Brain microvascular endothelial cell (primary cell): ENCODE measurements at regions of chr4 and their contacts with region 1.

Region 1: DNA sequence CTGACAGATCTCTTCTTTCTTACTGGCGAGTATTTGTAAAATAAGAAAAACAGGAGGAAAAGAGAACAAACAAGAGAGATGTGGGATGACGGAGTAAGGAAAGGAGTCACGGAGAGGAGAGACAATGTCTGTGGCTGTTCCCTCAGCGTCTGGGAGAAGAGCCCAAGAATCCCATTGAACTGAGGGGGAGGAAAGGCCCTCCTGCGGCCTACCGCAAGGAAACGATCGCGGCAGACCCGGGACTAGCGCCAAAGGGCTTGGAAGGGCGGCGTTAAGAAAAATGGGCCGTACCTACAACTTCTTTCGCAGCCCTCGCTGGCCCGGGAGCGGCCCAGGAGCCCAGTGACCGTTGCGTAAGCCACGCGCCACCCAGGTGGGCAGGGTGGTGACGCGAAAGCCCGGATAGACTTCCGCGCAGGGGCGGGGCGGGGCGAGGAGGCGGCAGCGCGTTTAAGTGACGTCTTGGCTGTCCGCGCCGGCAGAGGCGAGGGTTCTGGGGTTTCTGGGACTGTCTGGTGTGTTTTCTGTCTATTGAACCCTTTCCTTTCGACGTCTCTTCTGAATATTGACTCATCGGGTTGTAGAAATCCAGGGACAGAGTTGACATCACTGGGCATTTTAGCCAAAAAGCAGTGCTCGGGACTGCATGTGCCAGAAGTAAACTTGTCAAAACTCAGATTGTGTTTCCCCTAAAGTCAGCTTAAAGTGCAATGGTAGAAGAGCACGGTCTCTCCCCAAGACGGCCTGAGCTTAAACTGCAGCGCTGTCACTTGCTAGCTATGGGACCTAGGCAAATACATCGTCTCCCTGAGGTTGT is at the start of gene SLC9B1:
- DNase-seq: peak; percentile 96
- H3K4me3 ChIP-seq: peak within 1 kb of the TSS; percentile 59
- H3K27ac ChIP-seq: peak within 1 kb of the TSS; percentile 75
- H3K27me3 ChIP-seq: no peaks in the 10 kb centered on the region
- CTCF ChIP-seq: no peak

Region 2: GRCh38 chr4:102620697-102621497 is 398.6 kb before region 1 on chr4:
- in situ Hi-C with region 1: loop called (anchors 25 kb)
- DNase-seq: peak; percentile 80
- H3K4me3 ChIP-seq: peak overlapping the region; percentile 30
- H3K27ac ChIP-seq: peak overlapping the region; percentile 45
- H3K27me3 ChIP-seq: no peaks in the 10 kb centered on the region
- CTCF ChIP-seq: peak; percentile 74

Region 3: GRCh38 chr4:102815981-102816380 is 203.5 kb before region 1 on chr4:
- in situ Hi-C with region 1: loop called (anchors 25 kb)
- DNase-seq: peak; percentile 69
- H3K4me3 ChIP-seq: no peak overlapping the region
- H3K27ac ChIP-seq: peak overlapping the region; percentile 76
- H3K27me3 ChIP-seq: no peaks in the 10 kb centered on the region
- CTCF ChIP-seq: no peak